ENCODE measurements at regions of chr22 and their contacts with region 1.

Region 1: DNA sequence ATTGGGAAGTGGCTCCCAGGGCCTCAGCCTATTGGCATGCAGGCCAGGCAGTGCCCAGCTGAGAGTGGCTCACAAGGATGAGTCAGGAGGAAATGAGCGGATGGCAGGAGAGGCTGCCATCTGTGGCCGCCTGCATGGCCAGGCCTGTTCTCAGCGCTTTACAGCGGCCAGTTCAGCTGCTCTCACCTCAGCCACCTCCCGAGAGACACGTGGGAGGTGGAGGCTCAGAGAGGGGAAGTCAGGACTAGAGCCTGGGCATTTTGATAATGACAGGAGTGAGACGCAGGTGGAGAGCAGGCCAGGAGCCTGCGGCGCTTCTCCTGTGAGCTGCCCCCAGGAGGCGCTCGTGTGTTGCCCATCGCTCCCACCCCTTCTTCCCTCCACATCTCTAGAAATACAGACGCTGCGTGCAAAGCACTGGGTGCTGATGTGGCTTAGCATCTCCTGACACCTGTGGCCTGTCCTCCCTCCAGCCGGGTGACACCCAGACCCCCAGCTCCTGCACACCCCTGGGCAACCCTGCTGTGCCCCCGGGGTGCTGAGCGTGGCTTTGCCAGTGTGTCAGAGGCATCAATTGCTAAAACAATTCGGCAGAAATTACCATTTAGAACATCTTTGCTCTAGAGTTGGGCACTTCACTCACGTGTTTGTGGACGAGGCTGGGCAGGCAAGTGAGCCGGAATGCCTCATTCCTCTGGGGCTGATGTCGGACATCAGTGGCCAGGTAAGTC is 21.4 kb upstream of the PANX2 start:
- DNase-seq: peak; percentile 73 to 79 (median 75)
- ATAC-seq: peak; percentile 92
- H3K4me3 ChIP-seq: no peak overlapping the region
- H3K4me1 ChIP-seq: no peaks in the 10 kb centered on the region
- CTCF ChIP-seq: peak; percentile 81

Region 2: DNA sequence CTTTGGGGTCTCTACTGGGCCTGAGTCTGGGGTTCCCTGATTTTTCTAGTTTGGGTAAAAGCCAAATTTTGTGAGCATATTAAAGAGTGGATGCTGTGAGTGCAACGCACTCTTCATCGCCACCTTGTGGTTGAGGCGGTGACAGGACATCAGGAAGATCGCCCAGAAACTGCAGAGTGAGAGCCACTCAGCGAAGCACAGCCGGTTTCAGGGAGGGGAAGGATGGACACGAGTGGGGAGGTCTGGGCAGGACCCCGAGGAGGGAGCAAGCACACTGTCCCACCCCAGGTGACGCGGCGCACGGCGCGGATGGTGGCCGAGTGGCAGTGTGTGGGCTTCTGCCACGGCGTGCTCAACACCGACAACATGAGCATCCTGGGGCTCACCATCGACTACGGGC is 60.7 kb after region 1 on chr22:
- intact Hi-C with region 1: loop called (anchors 5 kb)
- DNase-seq: peak; percentile 63 to 84 (median 69)
- ATAC-seq: peak; percentile 82
- H3K4me3 ChIP-seq: no peak overlapping the region
- H3K4me1 ChIP-seq: no peaks in the 10 kb centered on the region
- CTCF ChIP-seq: peak; percentile 60

Measured in mucosa of descending colon (tissue), 3 donors.